ENCODE measurements at regions of chr2 and their contacts with region 1.

Region 1: GRCh38 chr2:36785179-36785795 is 88.8 kb downstream of the VIT start:
- DNase-seq: peak; percentile 74
- CTCF ChIP-seq: peak; percentile 92

Region 2: DNA sequence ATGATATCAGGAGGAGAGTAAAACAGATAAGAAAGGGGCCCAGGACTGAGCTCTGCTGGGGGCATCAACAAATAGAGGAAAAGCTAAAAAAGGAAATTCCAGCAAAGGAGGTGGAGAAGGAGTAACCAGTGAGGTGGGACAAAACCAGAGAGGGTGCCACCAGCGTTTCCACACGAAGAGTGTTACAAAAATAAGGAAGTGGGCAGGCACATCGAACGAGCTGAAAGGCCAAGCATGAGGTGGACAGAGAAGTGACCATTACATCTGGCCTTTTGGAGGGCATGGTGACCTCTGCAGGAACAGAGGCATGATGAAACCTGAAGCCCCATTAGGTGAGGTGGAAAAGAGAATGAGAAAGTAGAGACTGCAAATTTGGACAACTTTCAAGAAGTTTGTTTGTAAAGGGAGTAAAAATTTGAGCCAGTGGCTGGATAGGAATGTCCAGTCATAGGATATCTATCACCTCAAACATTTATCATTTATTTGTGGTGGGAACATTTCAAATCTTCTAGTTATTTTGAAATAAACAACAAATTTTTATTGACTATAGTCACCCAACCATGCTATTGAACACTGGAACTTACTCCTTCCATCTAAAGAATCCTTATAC is 107.2 kb before region 1 on chr2:
- CTCF ChIA-PET with region 1: no interaction called
- POLR2A ChIA-PET with region 1: no interaction called
- DNase-seq: no peak
- CTCF ChIP-seq: no peak

Region 3: GRCh38 chr2:36753706-36754221 is 31.5 kb before region 1 on chr2:
- CTCF ChIA-PET with region 1: interaction called, 10 read pairs
- POLR2A ChIA-PET with region 1: no interaction called
- DNase-seq: no peak
- CTCF ChIP-seq: no peak

Region 4: DNA sequence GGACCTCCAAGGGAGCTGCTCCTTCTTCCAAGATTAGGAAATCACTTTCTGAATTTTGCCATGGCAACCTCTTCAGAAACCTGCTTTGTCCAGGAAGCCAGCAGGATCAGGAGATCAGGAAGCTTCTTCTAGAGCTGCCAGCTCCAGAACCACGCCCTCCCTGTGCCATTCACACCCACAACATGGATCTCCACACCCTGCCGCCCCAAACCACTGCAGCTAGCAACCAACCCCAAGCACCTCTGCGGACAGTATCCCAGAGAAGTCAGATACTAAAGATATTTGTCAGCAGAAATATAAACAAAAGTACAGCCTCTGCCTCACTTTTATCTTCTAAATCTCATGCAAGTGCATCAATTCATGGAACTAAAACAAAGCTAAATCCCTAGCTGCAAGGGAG is 17.7 kb after region 1 on chr2:
- CTCF ChIA-PET with region 1: interaction called, 367 read pairs
- POLR2A ChIA-PET with region 1: no interaction called
- DNase-seq: no peak
- CTCF ChIP-seq: no peak

Region 5: DNA sequence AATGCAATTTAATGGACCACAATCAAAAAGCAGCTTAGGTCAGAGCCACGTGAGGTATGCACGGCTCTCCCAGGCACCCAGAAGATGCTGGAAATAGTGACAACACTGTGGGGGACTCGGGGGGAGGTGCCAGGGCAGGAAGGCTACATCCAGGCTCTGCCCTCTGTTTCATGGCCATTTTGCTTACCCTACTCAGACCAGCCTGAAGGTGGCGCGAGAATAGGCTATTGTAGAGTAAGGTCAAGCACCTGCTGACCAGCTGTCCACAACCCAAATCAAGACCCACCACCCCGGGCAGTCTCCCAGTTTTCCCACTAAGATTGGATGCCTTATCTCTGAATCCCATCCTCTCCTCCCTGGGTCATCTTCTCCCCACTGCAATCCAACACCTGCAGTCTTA is 26.9 kb after region 1 on chr2:
- CTCF ChIA-PET with region 1: interaction called, 14 read pairs
- POLR2A ChIA-PET with region 1: no interaction called
- DNase-seq: no peak
- CTCF ChIP-seq: no peak

Region 6: DNA sequence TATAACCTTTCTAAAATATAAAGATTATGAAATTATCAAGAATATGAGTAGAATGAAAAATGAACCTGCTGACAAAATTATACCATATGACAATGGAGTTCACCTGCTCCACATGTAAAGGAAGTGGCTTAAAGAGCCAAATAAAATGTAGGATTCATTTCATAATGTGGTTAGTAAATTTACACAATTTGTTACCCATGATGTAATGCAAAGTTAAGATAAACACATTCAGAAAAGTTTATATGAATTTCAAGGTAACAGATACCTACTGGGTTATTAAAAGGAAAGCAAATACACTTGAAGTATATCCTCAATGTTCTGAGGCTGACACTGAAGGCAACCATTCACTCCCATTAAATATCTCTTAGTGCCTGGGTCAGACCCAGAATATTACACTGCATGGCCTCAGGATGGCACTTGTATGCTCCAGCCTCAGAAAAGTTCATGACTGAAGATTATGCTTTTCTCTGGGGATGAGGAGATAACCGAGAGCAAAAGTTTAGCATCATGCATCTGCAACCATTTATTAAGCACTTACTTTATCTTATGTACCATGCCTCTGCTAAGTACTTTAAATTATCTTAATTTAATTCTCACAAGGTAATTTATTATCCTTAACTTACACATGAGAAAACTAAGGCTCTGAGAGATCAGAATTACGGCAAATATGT is 174.9 kb after region 1 on chr2:
- CTCF ChIA-PET with region 1: no interaction called
- POLR2A ChIA-PET with region 1: no interaction called
- DNase-seq: no peak
- CTCF ChIP-seq: no peak

Region 7: DNA sequence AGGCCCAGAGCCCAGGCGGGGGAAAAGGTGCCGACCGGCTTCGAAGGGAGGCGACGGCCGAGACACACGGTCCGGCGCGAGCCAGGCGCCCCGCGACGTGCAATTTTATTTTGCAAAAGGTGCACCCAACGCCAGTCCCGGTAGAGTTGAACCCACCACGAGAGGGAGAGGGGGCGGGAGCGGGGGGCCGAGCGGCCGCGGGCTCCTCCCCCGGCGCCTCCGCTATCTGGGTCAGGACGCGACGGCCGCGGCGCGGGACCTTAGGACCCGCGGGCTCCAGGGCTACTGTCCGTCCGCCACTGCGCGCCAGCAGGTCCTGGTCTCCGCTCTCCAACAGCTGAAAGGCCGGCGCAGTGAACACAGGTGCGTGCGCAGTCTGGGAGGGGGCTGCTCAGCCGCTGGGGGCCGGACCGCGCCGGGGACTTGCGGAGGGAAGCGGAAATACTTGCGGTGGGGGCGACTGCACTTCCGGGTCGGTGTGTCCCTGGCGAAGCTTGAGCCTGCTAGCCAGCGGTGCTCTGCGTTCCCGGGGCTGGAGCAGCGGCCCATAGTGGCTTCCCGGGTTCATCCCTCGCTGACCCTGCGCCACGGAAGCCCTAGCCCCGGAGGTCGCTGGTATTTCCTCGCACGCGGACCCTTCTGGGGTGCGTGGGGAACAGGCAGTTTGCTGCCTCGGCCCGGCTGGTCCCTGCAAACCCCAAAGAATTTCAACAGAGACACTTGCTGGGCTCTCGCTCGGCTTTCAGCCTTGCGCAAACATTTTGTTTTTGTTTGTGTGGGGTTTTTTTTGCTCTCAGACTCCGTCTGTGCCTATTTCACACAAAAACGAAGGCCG is 1140.0 kb after region 1 on chr2 and contains the start of gene RMDN2:
- CTCF ChIA-PET with region 1: no interaction called
- POLR2A ChIA-PET with region 1: no interaction called
- DNase-seq: peak; percentile 89
- CTCF ChIP-seq: peak; percentile 8

Measured in GM10248 (cell line).